Adrenal gland (tissue), 19 donors: ENCODE measurements at regions of chr10 and their contacts with region 1.

Region 1: DNA sequence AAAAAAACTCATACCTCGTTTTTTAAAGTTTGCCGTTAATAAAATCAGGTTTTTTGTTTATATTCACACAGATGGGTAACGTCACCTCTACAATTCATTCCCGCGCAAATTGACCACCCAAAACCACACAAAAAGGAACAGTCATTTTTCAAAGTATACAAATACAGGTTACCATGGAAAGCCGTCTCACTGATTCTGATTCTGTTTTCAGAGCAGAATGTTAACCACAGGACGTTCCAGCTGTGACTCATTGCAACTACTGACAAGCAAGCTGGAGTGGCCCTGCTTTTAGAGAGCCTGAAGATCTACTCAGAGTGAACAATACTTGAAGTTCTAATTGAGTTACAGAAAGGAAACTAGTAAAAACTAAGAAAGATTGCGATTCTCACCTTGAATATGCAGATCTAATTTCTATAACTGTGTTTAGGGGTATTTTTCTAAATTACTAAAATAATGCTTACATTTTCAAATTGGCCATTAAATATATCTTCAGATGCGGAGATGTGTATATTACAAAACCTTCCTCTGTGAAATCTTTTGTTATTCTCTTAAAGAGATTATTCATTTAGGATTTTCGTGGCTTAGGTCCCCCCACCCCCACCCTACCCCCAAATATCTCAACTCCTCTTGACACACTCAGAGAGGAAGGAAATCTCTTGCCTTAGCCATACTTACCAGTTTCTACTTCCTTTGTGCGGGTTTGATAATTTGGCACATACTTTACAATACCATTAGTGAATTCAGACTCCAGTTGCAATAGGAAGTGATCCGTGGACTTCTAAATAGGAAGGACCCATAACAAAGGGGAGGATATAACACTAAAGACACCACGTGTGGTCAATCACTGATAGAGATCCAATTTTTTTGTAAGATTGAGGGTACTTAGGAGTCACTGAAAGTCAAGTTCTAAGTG is 106.0 kb downstream of the CUBN start:
- DNase-seq: peak in 6 of 7 donors; percentile 56 to 84 (median 71)
- H3K4me3 ChIP-seq: no peak overlapping the region
- H3K27ac ChIP-seq: peak overlapping the region in 3 of 5 donors; percentile 1 to 37 (median 36)
- H3K4me1 ChIP-seq: peaks cover 0 to 18% of the 10 kb centered on the region in 2 donors
- H3K27me3 ChIP-seq: no peaks in the 10 kb centered on the region
- CTCF ChIP-seq: no peak
- POLR2A ChIP-seq: peak in 1 of 2 donors; percentile 58

Region 2: GRCh38 chr10:16673443-16673842 is 350.2 kb before region 1 on chr10:
- intact Hi-C with region 1: no loop called
- DNase-seq: no peak
- H3K4me3 ChIP-seq: no peak overlapping the region
- H3K27ac ChIP-seq: no peak overlapping the region
- H3K4me1 ChIP-seq: no peaks in the 10 kb centered on the region
- H3K27me3 ChIP-seq: no peaks in the 10 kb centered on the region
- CTCF ChIP-seq: no peak
- POLR2A ChIP-seq: no peak

Region 3: DNA sequence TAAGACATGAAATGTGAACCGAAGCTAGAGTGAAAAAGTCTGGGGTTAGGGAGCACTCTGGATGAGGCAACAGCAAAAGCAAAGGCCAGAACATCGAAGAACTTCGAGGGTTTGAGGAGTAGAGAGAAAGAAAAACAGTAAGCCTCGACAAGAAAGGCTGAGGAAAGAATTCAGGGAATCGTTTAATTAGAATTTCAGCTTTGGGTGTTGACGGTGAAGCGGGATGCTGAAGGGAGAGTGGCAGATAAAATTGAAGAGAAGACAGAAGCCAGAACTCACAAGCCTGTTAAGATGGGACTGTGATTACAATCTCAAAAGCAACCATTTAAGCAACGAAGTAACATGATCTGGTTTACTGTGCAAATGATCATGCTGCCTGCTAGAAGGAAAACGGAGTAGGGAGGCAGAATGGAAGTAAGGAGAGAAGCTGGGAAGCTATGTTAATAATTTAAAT is 175.7 kb after region 1 on chr10:
- intact Hi-C with region 1: loop called in 1 of 2 experiments (anchors 10 kb)
- DNase-seq: no peak
- H3K4me3 ChIP-seq: peak overlapping the region in 1 of 4 donors; percentile 73
- H3K27ac ChIP-seq: peak overlapping the region in 3 of 5 donors; percentile 71 to 96 (median 90)
- H3K4me1 ChIP-seq: peaks cover 4 to 12% of the 10 kb centered on the region in 2 donors
- H3K27me3 ChIP-seq: no peaks in the 10 kb centered on the region
- CTCF ChIP-seq: no peak
- POLR2A ChIP-seq: no peak